ENCODE measurements at regions of chr2 and their contacts with region 1.

Region 1: GRCh38 chr2:214816134-214816533 is 6.7 kb upstream of the BARD1 start:
- DNase-seq: no peak
- H3K4me3 ChIP-seq: no peak overlapping the region
- H3K27ac ChIP-seq: no peak overlapping the region
- H3K4me1 ChIP-seq: peaks cover 0 to 7% (median 6%) of the 10 kb centered on the region in 4 experiments; a peak in 4 of 7 replicates
- H3K27me3 ChIP-seq: no peaks in the 10 kb centered on the region
- CTCF ChIP-seq: no peak
- EP300 ChIP-seq: no peak
- POLR2A ChIP-seq: no peak
- RAD21 ChIP-seq: no peak

Region 2: DNA sequence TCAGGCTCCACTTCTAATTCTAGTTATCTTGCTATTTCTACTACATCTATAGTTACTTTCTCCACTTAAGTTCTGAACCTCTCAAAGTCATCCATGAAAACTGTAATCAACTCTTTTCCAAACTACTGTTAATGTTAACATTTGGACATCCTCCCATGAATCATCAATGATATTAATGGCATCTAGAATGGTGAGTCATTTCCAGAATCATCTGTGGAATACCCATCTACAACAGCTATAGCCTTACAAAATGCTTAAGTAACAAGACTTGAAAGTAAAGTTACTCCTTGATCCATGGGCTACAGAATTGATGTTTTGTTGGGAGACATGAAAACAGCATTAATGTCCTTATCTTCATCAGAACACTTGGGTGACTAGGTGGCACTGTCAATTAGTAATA is 42.0 kb before region 1 on chr2:
- CTCF ChIA-PET with region 1: no interaction called
- POLR2A ChIA-PET with region 1: no interaction called
- DNase-seq: no peak
- H3K4me3 ChIP-seq: no peak overlapping the region
- H3K27ac ChIP-seq: no peak overlapping the region
- H3K4me1 ChIP-seq: no peaks in the 10 kb centered on the region
- H3K27me3 ChIP-seq: no peaks in the 10 kb centered on the region
- CTCF ChIP-seq: no peak
- EP300 ChIP-seq: no peak
- POLR2A ChIP-seq: no peak
- RAD21 ChIP-seq: no peak

Region 3: DNA sequence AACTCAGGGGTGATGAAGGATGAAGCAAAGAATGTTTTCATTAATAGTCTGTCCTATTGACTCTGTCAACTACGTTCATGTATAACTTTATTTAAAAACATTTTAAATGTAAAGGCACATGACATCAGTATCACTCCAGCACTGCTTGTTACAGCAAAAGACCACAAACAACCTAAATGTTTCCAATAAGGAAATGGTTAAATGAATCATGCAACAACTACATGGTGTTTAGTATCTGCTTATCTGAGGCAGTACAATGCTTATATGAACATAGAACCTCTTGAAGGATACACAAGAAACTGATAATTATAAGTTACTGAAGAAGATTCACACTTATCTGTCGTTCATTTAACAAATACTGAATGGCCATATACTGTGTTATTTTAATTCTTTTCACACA is 15.1 kb before region 1 on chr2:
- CTCF ChIA-PET with region 1: no interaction called
- POLR2A ChIA-PET with region 1: no interaction called
- DNase-seq: no peak
- H3K4me3 ChIP-seq: no peak overlapping the region
- H3K27ac ChIP-seq: no peak overlapping the region
- H3K4me1 ChIP-seq: peaks cover 0 to 8% (median 5%) of the 10 kb centered on the region in 4 experiments; a peak in 3 of 7 replicates
- H3K27me3 ChIP-seq: no peaks in the 10 kb centered on the region
- CTCF ChIP-seq: no peak
- EP300 ChIP-seq: no peak
- POLR2A ChIP-seq: no peak
- RAD21 ChIP-seq: no peak

Region 4: DNA sequence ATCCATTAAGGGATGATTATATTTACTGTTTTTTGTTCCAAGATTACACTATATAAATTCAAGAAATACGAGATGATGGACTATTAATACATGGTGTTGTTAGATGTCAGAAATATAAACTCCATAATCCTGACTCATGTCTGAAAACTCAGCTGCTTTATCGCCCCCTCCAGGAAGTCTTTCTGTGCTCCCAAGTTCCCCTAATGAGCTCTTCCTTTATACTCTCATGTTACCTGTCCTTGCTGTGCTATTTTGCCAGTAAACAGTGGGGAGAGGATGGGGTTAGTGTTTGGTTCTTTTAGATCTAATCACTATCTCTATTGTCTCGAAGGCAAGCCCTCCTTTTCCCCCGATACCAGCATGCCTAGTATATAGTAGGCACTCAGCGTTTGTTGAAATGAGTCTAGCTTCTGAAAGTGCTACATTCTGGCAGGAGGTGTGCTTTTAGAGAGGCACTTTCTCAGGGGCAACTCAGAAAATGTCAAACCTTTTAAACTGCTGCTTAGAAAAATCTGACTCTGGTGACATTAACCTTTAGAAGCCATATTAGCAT is 14.7 kb after region 1 on chr2:
- CTCF ChIA-PET with region 1: interaction called, 10 read pairs
- POLR2A ChIA-PET with region 1: interaction called, 3 read pairs
- DNase-seq: no peak
- H3K4me3 ChIP-seq: no peak overlapping the region
- H3K27ac ChIP-seq: no peak overlapping the region
- H3K4me1 ChIP-seq: peaks cover 0 to 3% (median 0%) of the 10 kb centered on the region in 4 experiments; a peak in 1 of 7 replicates
- H3K27me3 ChIP-seq: no peaks in the 10 kb centered on the region
- CTCF ChIP-seq: peak in 2 of 3 experiments; percentile 38 to 55; a peak in 2 of 4 replicates
- EP300 ChIP-seq: no peak
- POLR2A ChIP-seq: no peak
- RAD21 ChIP-seq: peak; percentile 51 to 60

Measured in H1 (cell line).